ENCODE measurements at regions of chr6 and their contacts with region 1.

Region 1: DNA sequence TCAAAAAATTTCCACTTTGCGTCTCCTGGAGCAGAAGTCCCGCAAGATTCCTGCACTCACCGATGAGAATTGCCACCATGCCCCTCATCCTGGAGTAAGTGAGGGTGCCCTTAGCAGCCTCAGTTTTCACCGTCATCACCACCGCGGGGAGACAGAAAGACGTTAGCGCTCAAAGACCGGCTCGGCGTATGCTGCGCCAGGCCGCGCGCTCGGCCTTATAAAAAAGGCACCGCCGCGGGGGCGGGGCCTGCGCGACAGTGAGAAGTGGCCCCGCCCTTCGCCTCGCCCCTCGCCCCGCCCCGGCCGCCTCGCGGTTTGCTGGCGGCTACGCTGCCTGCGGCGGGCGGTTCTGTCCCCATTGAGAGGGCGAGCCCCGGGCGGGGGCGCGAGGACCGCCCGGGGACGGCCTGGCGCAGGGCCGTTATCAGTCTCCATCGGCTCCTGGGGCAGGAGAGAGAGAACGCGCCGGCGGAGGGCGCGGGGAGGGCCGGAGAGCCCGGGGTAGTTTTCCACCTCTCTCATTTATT is 122.3 kb upstream of the SLC2A12 start:
- DNase-seq: peak; percentile 89 to 95
- H3K4me3 ChIP-seq: peak overlapping the region; percentile 80 to 90
- H3K27ac ChIP-seq: peak overlapping the region; percentile 96 to 99
- H3K4me1 ChIP-seq: peaks cover 0 to 32% (median 20%) of the 10 kb centered on the region in 4 donors
- H3K27me3 ChIP-seq: no peaks in the 10 kb centered on the region
- CTCF ChIP-seq: no peak

Region 2: DNA sequence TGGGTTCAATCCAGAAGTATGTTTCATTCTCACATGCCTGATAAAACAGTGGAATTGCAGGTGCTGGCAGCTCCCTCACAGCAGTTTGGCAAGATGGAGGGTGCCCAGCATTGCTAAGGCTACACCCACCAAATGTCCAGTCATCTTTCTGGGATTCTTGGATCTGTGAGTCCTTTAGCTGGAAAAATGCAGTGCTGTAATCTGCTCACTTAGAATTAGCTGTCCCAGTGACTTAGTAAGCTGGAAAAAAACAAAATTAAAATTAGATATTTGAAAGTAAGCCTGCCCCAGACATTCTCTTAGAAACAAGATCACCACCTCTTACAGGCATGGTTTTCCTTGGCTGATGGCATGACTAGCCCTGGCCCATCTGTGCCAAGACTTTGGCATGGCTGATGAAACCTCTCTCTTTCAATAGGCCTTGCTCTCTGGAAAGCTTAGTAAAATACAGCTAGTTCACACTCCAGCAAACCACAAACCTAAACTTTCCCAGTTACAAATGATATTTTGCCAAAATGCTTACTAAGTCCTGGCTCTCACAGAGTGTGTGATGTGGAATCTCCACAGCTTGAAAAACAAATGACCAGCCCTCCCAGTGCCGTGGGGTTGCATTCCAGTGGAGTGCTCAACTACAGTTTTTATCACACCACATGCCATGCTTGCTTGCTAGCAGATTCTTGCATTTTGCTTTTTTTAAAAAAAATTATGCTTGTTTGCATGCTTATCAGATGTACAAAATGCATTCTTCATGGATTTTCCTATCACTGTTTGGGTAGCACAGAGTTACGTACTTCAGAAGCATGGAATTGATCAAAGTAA is 672.1 kb before region 1 on chr6:
- intact Hi-C with region 1: no loop called
- DNase-seq: peak; percentile 59 to 89
- H3K4me3 ChIP-seq: no peak overlapping the region
- H3K27ac ChIP-seq: peak overlapping the region; percentile 51 to 53
- H3K4me1 ChIP-seq: peaks cover 0 to 57% (median 37%) of the 10 kb centered on the region in 4 donors
- H3K27me3 ChIP-seq: no peaks in the 10 kb centered on the region
- CTCF ChIP-seq: no peak

Region 3: DNA sequence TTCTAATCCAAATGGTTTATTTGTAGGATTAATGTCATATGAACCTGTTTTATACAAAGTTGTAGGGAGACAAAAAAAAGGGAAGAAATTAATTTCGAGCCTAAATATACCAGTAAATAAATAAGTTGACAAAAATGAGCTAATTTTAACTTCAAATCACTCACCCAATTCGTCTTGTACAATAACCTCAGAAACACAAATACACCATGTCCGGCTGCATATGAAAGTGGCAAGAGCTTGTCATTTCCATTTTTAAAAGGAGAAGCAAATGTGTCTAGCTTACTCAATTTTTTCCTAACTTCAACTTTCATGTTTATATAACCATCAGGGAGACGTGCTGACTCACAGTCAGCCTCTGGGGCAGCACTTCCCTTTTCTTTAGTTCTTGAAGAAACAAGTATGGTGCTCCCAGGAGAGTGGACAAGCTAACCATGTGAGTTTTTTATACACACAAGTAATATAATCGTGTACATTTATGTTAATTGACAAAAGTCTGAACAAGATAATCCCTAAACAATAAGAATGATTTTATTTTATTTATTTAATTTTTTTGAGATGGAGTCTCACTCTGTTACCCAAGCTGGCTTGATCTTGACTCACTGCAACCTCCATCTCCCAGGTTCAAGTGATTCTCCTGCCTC is 198.7 kb after region 1 on chr6:
- intact Hi-C with region 1: loop called (anchors 10 kb)
- DNase-seq: peak; percentile 85 to 87
- H3K4me3 ChIP-seq: no peak overlapping the region
- H3K27ac ChIP-seq: peak overlapping the region; percentile 65 to 73
- H3K4me1 ChIP-seq: peaks cover 0 to 33% (median 24%) of the 10 kb centered on the region in 4 donors
- H3K27me3 ChIP-seq: no peaks in the 10 kb centered on the region
- CTCF ChIP-seq: no peak

Region 4: DNA sequence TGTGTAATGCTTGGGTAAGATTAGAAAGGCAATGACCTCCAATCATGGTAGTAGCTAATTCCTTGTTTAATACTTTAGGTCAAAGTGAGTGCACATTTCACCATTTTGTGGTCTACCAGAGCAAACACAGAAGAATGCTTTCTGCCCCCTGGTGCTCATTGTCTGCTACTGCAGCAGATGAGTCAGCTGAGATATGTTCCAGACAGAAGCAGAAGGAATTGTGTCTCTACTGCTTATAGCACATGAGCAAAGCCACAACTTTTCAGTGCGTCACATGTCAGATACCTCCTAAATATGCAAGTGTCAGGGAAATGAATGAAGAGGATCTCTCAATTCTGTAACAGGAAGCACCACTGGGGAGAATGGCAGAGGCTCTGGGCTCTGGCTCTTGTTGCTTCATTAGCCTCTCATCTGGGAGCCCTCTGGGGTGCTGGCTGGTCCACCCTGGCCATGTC is 466.3 kb after region 1 on chr6:
- intact Hi-C with region 1: loop called (anchors 1 kb)
- DNase-seq: peak; percentile 90 to 91
- H3K4me3 ChIP-seq: no peak overlapping the region
- H3K27ac ChIP-seq: no peak overlapping the region
- H3K4me1 ChIP-seq: no peaks in the 10 kb centered on the region
- H3K27me3 ChIP-seq: no peaks in the 10 kb centered on the region
- CTCF ChIP-seq: peak; percentile 89 to 95

Region 5: GRCh38 chr6:134822920-134823709 is 648.4 kb after region 1 on chr6:
- intact Hi-C with region 1: loop called (anchors 5 kb)
- DNase-seq: no peak
- H3K4me3 ChIP-seq: no peak overlapping the region
- H3K27ac ChIP-seq: no peak overlapping the region
- H3K4me1 ChIP-seq: peaks cover 0 to 23% (median 15%) of the 10 kb centered on the region in 4 donors
- H3K27me3 ChIP-seq: no peaks in the 10 kb centered on the region
- CTCF ChIP-seq: peak; percentile 87 to 91